Left cardiac atrium (tissue), 4 donors: ENCODE measurements at regions of chr2 and their contacts with region 1.

Region 1: GRCh38 chr2:37832590-37833197 is 92.4 kb upstream of the RMDN2 start:
- DNase-seq: peak; percentile 91
- ATAC-seq: peak; percentile 81

Region 2: DNA sequence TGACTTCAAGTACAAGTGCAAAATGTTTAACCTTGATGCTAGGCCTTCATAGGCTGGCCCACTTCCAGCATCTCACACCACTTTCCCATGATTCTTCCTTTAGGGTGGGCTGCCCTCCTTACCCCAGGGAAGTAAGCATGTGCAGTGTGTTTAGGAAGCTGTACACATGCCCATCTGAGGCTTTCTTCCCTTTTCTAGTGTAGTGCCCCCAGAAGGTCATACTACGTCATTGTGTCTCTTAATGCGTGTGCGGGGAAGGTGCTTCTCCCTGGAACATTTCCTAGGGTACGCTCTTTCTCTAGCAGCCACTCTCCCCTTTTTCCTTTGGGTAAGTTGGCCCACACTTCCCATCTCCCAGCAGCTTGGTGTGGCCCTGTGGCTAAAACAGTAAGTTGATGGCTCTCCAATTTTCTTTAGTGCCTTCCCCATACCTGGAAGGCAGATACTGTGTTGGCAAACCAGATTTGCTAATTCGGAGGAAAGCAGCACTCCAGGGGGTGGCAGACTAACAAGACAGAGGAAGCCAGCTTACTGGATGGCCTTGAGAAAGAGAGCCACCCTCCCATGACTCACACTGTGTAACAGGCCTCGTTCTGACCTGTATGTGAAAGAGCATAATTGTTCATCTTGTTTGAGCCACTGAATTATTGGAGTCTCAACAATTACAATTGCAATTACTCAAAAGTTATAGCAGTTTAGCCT is 643.1 kb before region 1 on chr2:
- intact Hi-C with region 1: no loop called
- DNase-seq: no peak
- ATAC-seq: peak in 1 of 2 donors; percentile 58

Region 3: GRCh38 chr2:37389989-37390765 is 442.5 kb before region 1 on chr2:
- intact Hi-C with region 1: loop called in 1 of 2 experiments (anchors 5 kb)
- DNase-seq: no peak
- ATAC-seq: peak; percentile 69 to 83

Region 4: GRCh38 chr2:37414470-37414949 is 418.2 kb before region 1 on chr2:
- intact Hi-C with region 1: loop called in 1 of 2 experiments (anchors 1 kb)
- DNase-seq: no peak
- ATAC-seq: peak; percentile 84 to 85

Region 5: DNA sequence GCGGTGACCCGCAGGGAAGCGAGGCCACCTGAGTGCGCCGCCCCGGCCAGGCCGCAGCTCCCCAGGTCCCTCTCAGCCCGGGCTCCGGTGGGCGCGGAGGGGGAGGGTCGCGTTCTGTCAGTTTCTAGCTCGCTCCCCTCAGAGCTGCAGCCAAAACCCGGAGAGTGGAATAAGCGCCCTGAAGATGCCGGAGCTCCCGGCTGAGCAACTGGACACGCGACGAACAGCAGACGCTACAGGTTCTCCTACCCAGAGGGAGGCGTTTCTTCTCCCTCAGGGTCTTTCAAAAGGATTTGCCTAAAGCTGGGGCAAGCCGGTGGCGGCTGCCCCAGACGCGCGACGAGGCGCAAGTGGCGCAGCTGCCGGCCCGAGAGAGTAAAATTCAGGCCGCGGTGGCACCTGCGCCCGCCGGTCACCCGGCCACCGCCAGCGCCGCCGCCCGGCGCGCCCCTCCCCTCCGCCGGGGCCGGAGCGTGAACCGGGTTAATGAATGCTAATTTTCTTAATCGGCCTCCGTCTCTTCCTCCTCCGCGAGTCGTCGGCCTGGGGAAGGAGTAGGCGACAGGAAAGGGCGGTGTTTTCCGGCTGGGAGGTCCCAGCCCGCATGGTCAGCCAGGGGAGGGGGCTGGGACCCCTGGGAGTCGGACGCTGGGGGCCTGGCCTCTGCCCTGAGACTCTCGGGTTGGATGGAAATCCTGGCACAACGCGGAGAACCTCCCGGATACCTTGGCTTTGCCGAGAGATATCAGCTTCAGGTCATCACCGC is 160.4 kb before region 1 on chr2:
- intact Hi-C with region 1: loop called in 1 of 2 experiments (anchors 5 kb)
- DNase-seq: peak; percentile 80
- ATAC-seq: peak; percentile 56 to 71

Region 6: DNA sequence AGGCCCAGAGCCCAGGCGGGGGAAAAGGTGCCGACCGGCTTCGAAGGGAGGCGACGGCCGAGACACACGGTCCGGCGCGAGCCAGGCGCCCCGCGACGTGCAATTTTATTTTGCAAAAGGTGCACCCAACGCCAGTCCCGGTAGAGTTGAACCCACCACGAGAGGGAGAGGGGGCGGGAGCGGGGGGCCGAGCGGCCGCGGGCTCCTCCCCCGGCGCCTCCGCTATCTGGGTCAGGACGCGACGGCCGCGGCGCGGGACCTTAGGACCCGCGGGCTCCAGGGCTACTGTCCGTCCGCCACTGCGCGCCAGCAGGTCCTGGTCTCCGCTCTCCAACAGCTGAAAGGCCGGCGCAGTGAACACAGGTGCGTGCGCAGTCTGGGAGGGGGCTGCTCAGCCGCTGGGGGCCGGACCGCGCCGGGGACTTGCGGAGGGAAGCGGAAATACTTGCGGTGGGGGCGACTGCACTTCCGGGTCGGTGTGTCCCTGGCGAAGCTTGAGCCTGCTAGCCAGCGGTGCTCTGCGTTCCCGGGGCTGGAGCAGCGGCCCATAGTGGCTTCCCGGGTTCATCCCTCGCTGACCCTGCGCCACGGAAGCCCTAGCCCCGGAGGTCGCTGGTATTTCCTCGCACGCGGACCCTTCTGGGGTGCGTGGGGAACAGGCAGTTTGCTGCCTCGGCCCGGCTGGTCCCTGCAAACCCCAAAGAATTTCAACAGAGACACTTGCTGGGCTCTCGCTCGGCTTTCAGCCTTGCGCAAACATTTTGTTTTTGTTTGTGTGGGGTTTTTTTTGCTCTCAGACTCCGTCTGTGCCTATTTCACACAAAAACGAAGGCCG is 92.6 kb after region 1 on chr2 and contains the start of gene RMDN2:
- intact Hi-C with region 1: no loop called
- DNase-seq: peak; percentile 94
- ATAC-seq: peak; percentile 98 to 99
- total RNA-seq, gene RMDN2: 4.6 to 5.8 TPM